CD4-positive, alpha-beta T cell (primary cell): ENCODE measurements at regions of chr5 and their contacts with region 1.

Region 1: GRCh38 chr5:149990518-149991376 is 9.7 kb downstream of the TIGD6 start:
- DNase-seq: peak; percentile 46 to 83 (median 57)
- ATAC-seq: peak; percentile 94
- H3K4me3 ChIP-seq: no peak overlapping the region
- H3K4me3 Mint-ChIP-seq: no peak overlapping the region
- H3K27ac ChIP-seq: no peak overlapping the region
- H3K27ac Mint-ChIP-seq: no peak overlapping the region
- H3K4me1 ChIP-seq: no peaks in the 10 kb centered on the region
- H3K4me1 Mint-ChIP-seq: no peaks in the 10 kb centered on the region
- H3K27me3 ChIP-seq: no peaks in the 10 kb centered on the region
- H3K27me3 Mint-ChIP-seq: no peaks in the 10 kb centered on the region
- CTCF ChIP-seq: peak; percentile 97

Region 2: GRCh38 chr5:149636851-149637246 is 353.9 kb before region 1 on chr5:
- CTCF ChIA-PET with region 1: interaction called, 18 read pairs
- POLR2A ChIA-PET with region 1: no interaction called
- intact Hi-C with region 1: loop called (anchors 1 kb)
- DNase-seq: peak in 8 of 14 experiments; percentile 35 to 83 (median 64)
- ATAC-seq: peak; percentile 57
- H3K4me3 ChIP-seq: no peak overlapping the region
- H3K4me3 Mint-ChIP-seq: no peak overlapping the region
- H3K27ac ChIP-seq: no peak overlapping the region
- H3K27ac Mint-ChIP-seq: no peak overlapping the region
- H3K4me1 ChIP-seq: peaks cover 2% of the 10 kb centered on the region
- H3K4me1 Mint-ChIP-seq: no peaks in the 10 kb centered on the region
- H3K27me3 ChIP-seq: no peaks in the 10 kb centered on the region
- H3K27me3 Mint-ChIP-seq: no peaks in the 10 kb centered on the region
- CTCF ChIP-seq: peak; percentile 92

Region 3: DNA sequence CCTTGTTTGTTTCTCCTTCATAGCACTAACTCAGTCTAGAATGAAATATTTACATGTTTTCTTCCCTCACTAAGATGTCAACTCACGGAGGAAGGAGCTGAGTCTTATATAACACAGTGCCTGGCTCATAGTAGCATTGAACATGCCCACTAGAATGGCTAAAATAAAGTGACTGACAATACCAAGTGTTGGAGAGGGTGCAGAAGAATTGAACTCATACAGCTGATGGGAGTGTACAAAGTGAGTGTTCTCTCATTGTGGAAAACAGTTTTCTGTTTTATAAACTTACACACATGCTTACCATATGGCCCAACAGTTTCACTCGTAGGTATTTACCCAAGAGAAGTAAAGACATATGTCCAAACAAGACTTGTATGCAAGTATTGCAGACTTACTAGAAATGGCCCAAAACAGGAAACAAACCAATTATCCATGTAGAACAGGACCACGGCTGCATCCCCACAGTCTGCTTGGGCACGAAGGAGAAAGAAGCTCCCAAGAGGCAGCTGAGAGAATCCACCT is 173.1 kb before region 1 on chr5:
- CTCF ChIA-PET with region 1: no interaction called
- POLR2A ChIA-PET with region 1: no interaction called
- intact Hi-C with region 1: no loop called
- DNase-seq: no peak
- ATAC-seq: no peak
- H3K4me3 ChIP-seq: no peak overlapping the region
- H3K4me3 Mint-ChIP-seq: no peak overlapping the region
- H3K27ac ChIP-seq: no peak overlapping the region
- H3K27ac Mint-ChIP-seq: no peak overlapping the region
- H3K4me1 ChIP-seq: no peaks in the 10 kb centered on the region
- H3K4me1 Mint-ChIP-seq: no peaks in the 10 kb centered on the region
- H3K27me3 ChIP-seq: no peaks in the 10 kb centered on the region
- H3K27me3 Mint-ChIP-seq: no peaks in the 10 kb centered on the region
- CTCF ChIP-seq: no peak

Region 4: GRCh38 chr5:149834246-149834855 is 156.4 kb before region 1 on chr5:
- CTCF ChIA-PET with region 1: interaction called, 26 read pairs
- POLR2A ChIA-PET with region 1: interaction called, 3 read pairs
- intact Hi-C with region 1: loop called (anchors 1 kb)
- DNase-seq: peak in 13 of 14 experiments; percentile 5 to 78 (median 32)
- ATAC-seq: peak; percentile 51
- H3K4me3 ChIP-seq: no peak overlapping the region
- H3K4me3 Mint-ChIP-seq: no peak overlapping the region
- H3K27ac ChIP-seq: no peak overlapping the region
- H3K27ac Mint-ChIP-seq: no peak overlapping the region
- H3K4me1 ChIP-seq: no peaks in the 10 kb centered on the region
- H3K4me1 Mint-ChIP-seq: no peaks in the 10 kb centered on the region
- H3K27me3 ChIP-seq: no peaks in the 10 kb centered on the region
- H3K27me3 Mint-ChIP-seq: no peaks in the 10 kb centered on the region
- CTCF ChIP-seq: peak; percentile 61

Region 5: DNA sequence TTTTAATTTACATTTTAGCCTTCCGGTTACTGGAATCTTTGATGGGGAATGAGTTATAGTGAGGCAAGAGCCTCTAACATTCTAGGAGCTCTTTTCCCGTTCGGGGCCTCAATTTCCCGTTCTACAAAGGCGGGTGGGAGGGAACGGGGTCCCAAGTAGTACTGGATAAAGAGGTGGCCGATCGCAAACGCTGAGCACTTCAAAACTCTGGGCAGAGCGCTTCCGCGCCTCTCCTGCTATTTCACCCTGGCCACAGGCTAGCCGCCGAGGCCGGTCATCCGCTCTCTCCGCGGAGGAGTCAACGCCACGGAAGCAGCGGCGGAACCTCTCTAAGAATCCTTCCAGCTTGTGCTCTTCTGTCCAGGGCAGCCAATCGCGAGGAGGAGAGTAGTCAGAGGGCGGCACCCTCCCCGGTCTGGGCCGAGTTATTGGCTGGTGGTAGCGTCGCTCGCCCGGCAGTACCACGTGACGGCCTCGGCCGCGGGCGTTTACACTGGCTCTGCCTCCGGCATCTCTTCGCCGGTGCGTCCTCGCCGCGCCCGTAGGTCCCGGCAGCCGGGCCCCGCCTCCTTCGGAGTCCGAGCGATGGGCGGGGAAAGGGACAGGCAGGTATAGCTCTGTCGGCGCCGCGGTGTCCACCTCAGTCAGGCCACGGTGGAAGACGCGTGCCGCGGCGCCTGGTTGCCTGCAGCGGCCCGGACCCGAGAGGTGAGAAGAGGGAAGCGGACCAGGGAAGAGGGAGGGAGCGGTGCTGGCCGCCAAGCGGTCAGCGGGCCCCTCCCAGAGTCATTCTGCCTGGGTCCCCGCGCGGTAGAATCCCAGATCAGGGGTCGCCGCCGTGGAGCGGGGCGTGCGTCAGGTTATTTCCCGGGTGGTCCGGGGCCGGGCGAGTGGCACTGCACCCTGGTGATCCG is 30.2 kb before region 1 on chr5 and contains the start of gene SLC26A2:
- CTCF ChIA-PET with region 1: interaction called, 15 read pairs
- POLR2A ChIA-PET with region 1: no interaction called
- intact Hi-C with region 1: no loop called
- DNase-seq: peak; percentile 85 to 97 (median 90)
- ATAC-seq: peak; percentile 97
- H3K4me3 ChIP-seq: peak within 1 kb of the TSS; percentile 98
- H3K4me3 Mint-ChIP-seq: peak within 1 kb of the TSS; percentile 93
- H3K27ac ChIP-seq: peak within 1 kb of the TSS; percentile 67 to 87
- H3K27ac Mint-ChIP-seq: peak within 1 kb of the TSS; percentile 93
- H3K4me1 ChIP-seq: peaks cover 28% of the 10 kb centered on the region
- H3K4me1 Mint-ChIP-seq: peaks cover 32% of the 10 kb centered on the region
- H3K27me3 ChIP-seq: no peaks in the 10 kb centered on the region
- H3K27me3 Mint-ChIP-seq: no peaks in the 10 kb centered on the region
- CTCF ChIP-seq: no peak
- total RNA-seq, gene SLC26A2: 2.8 to 4.2 TPM

Region 6: GRCh38 chr5:150022163-150022540 is 31.4 kb after region 1 on chr5:
- CTCF ChIA-PET with region 1: no interaction called
- POLR2A ChIA-PET with region 1: no interaction called
- intact Hi-C with region 1: no loop called
- DNase-seq: no peak
- ATAC-seq: no peak
- H3K4me3 ChIP-seq: no peak overlapping the region
- H3K4me3 Mint-ChIP-seq: no peak overlapping the region
- H3K27ac ChIP-seq: no peak overlapping the region
- H3K27ac Mint-ChIP-seq: no peak overlapping the region
- H3K4me1 ChIP-seq: no peaks in the 10 kb centered on the region
- H3K4me1 Mint-ChIP-seq: no peaks in the 10 kb centered on the region
- H3K27me3 ChIP-seq: no peaks in the 10 kb centered on the region
- H3K27me3 Mint-ChIP-seq: no peaks in the 10 kb centered on the region
- CTCF ChIP-seq: no peak

Region 7: GRCh38 chr5:150357326-150358260 is 366.8 kb after region 1 on chr5 and contains the start of gene TCOF1:
- CTCF ChIA-PET with region 1: no interaction called
- POLR2A ChIA-PET with region 1: no interaction called
- intact Hi-C with region 1: loop called in 1 of 2 experiments (anchors 10 kb)
- DNase-seq: peak; percentile 93 to 98 (median 97)
- ATAC-seq: peak; percentile 98
- H3K4me3 ChIP-seq: peak within 1 kb of the TSS; percentile 86
- H3K4me3 Mint-ChIP-seq: peak within 1 kb of the TSS; percentile 89
- H3K27ac ChIP-seq: peak within 1 kb of the TSS in 1 of 2 donors; percentile 46
- H3K27ac Mint-ChIP-seq: peak within 1 kb of the TSS; percentile 73
- H3K4me1 ChIP-seq: peaks cover 28% of the 10 kb centered on the region
- H3K4me1 Mint-ChIP-seq: peaks cover 47% of the 10 kb centered on the region
- H3K27me3 ChIP-seq: no peaks in the 10 kb centered on the region
- H3K27me3 Mint-ChIP-seq: no peaks in the 10 kb centered on the region
- CTCF ChIP-seq: no peak
- total RNA-seq, gene TCOF1: 40.4 to 43.2 TPM